ENCODE measurements at regions of chr14 and their contacts with region 1.

Region 1: GRCh38 chr14:89040460-89041259 is 216.2 kb downstream of the TTC8 start:
- DNase-seq: peak; percentile 57 to 87 (median 76)
- ATAC-seq: peak; percentile 67
- H3K4me3 ChIP-seq: peak overlapping the region; percentile 49
- H3K4me3 Mint-ChIP-seq: peak overlapping the region; percentile 60
- H3K27ac ChIP-seq: no peak overlapping the region
- H3K27ac Mint-ChIP-seq: no peak overlapping the region
- H3K4me1 ChIP-seq: peaks cover 14% of the 10 kb centered on the region
- H3K4me1 Mint-ChIP-seq: peaks cover 15% of the 10 kb centered on the region
- H3K27me3 ChIP-seq: peaks cover 0 to 3% of the 10 kb centered on the region in 2 experiments
- H3K27me3 Mint-ChIP-seq: peaks cover 45% of the 10 kb centered on the region
- CTCF ChIP-seq: peak; percentile 98

Region 2: GRCh38 chr14:89237921-89238529 is 197.4 kb after region 1 on chr14:
- CTCF ChIA-PET with region 1: no interaction called
- POLR2A ChIA-PET with region 1: no interaction called
- intact Hi-C with region 1: no loop called
- DNase-seq: no peak
- ATAC-seq: no peak
- H3K4me3 ChIP-seq: no peak overlapping the region
- H3K4me3 Mint-ChIP-seq: no peak overlapping the region
- H3K27ac ChIP-seq: no peak overlapping the region
- H3K27ac Mint-ChIP-seq: no peak overlapping the region
- H3K4me1 ChIP-seq: peaks cover 18% of the 10 kb centered on the region
- H3K4me1 Mint-ChIP-seq: peaks cover 73% of the 10 kb centered on the region
- H3K27me3 ChIP-seq: no peaks in the 10 kb centered on the region
- H3K27me3 Mint-ChIP-seq: no peaks in the 10 kb centered on the region
- CTCF ChIP-seq: no peak

Region 3: DNA sequence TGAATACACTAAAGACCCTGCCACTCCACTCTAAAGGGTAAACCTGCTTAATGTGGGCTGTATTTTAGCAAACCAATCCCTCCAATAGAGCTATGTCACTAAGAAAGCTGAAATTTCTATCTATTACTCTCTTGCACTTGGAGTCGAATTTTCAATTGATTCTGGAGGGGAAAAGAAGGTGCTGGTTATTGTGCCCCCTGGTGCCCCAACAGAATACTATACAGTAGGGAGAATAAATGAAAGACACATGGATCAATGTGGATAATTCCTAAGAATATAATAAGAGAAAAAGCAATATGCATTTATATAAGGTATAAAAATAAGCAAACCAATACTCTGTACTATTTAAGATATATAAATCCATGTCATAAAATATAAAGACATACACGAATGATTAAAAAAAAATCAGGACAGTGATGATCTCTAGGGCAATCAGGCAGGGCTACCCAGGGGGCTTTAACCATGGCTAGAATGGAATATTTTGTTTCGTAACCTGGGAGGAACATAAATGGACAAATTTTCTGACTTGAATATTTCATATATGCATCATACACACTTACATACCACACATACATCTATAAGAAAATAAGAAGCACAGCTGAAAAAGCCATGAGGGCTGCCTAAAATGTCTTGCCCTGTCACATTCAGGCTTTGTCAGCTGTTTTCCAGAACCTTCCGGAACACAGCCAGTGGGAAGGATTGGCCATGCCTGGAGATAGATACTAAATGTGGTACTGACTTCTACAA is 859.4 kb after region 1 on chr14:
- CTCF ChIA-PET with region 1: no interaction called
- POLR2A ChIA-PET with region 1: no interaction called
- intact Hi-C with region 1: loop called in 1 of 2 experiments (anchors 1 kb)
- DNase-seq: peak in 4 of 14 experiments; percentile 24 to 54 (median 40)
- ATAC-seq: no peak
- H3K4me3 ChIP-seq: no peak overlapping the region
- H3K4me3 Mint-ChIP-seq: no peak overlapping the region
- H3K27ac ChIP-seq: no peak overlapping the region
- H3K27ac Mint-ChIP-seq: no peak overlapping the region
- H3K4me1 ChIP-seq: no peaks in the 10 kb centered on the region
- H3K4me1 Mint-ChIP-seq: peaks cover 16% of the 10 kb centered on the region
- H3K27me3 ChIP-seq: peaks cover 0 to 5% of the 10 kb centered on the region in 2 experiments
- H3K27me3 Mint-ChIP-seq: peaks cover 9% of the 10 kb centered on the region
- CTCF ChIP-seq: peak; percentile 31